ENCODE measurements at regions of chr7 and their contacts with region 1.

Region 1: DNA sequence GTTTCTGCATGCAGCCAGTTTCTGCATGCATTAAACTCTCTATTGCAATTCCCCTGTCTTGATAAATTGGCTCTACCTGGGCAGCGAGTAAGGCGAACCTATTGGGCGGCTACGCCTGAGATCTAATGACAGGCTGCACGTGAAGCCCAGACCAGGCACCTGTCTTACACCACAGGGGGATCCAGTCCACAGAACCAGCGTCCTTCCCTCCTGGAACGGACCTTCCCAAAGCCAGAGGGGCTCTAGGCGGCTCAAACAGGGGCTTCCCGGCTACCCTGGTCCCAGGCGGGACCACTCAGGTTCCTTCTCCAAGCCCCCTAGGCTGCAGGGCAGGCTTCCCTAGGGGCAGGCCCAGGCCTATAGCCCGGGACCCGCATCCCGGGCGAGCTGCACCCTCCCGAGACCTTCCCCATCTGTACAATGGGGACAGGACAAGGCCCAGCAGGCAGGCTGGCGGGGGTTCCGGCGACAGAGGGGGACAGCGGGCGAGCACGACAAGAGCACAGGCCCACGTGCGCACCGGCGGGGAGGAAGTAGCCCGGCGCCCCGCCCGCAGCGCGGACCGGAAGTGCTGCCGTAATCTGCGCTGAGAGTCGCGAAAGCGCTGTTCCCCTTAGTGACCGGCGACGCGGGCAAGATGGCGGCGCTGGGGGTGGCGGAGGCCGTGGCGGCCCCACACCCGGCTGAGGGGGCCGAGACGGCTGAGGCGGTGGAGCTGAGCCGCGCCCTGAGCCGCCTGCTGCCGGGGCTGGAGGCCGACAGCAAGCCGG is at the start of gene DNAAF5:
- DNase-seq: peak; percentile 30 to 88
- H3K4me3 ChIP-seq: peak within 1 kb of the TSS; percentile 78 to 97
- H3K27ac ChIP-seq: peak within 1 kb of the TSS; percentile 41 to 55
- H3K4me1 ChIP-seq: peaks cover 0 to 4% of the 10 kb centered on the region in 2 donors
- H3K27me3 ChIP-seq: no peaks in the 10 kb centered on the region
- CTCF ChIP-seq: no peak
- total RNA-seq, gene DNAAF5: 20.5 TPM

Region 2: GRCh38 chr7:774161-775109 is 48.2 kb after region 1 on chr7:
- intact Hi-C with region 1: loop called (anchors 5 kb)
- DNase-seq: no peak
- H3K4me3 ChIP-seq: no peak overlapping the region
- H3K27ac ChIP-seq: no peak overlapping the region
- H3K4me1 ChIP-seq: peaks cover 6 to 20% of the 10 kb centered on the region in 2 donors
- H3K27me3 ChIP-seq: no peaks in the 10 kb centered on the region
- CTCF ChIP-seq: peak; percentile 90 to 96 (median 94)

Region 3: GRCh38 chr7:786472-787255 is 60.4 kb after region 1 on chr7:
- intact Hi-C with region 1: no loop called
- DNase-seq: peak in 1 of 2 donors; percentile 82
- H3K4me3 ChIP-seq: no peak overlapping the region
- H3K27ac ChIP-seq: no peak overlapping the region
- H3K4me1 ChIP-seq: peaks cover 0 to 4% of the 10 kb centered on the region in 2 donors
- H3K27me3 ChIP-seq: no peaks in the 10 kb centered on the region
- CTCF ChIP-seq: peak; percentile 91 to 95 (median 95)